ENCODE measurements at regions of chr10 and their contacts with region 1.

Region 1: DNA sequence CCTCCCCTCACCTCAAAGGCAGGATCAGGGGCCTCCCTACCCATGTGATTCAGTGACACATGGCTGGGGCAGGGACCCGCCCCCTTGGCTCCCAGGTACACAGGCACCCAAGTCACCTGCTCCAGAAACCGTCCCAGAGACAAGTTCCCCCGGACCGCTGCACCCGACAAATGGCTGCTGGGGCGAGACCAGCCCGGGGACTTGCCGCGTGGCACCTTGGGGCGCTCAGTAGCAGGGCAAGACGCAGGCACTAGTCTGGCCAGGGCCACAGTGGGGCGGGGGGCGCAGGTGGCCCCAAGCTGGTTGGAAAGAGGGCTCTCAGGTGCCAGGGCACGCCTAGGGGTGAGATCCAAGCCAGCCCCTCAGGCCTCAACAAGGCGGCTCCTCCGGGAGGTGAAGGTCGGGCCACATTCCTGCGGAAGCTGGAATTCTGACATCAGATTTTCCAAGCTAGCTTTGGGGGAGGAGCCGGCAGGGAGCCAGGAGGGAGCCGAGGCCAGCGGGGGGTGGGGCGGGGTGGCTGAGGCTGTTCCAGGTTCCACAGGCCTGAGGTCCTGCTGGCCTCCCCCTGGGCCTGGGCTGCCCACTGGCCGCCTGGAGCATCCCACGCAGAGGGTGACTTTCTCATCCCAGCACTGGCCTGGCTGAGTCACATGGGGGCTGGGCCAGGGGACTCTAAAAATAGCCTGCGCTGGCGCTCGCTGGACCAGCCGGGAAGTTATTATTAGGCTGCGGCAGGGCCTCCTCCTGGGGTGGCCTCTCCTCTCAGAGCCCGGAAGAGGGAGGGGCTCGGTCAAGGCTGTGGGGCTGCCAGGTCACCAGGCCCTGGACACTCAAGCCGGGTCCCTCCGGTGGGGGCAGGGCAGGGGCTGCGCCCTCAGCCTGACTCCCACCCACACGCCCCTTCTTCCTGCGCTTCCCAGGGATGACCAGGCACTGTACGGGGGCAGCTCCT is 20.5 kb upstream of the INPP5A start:
- DNase-seq: peak; percentile 97

Region 2: GRCh38 chr10:132396495-132397035 is 120.5 kb before region 1 on chr10:
- intact Hi-C with region 1: loop called (anchors 5 kb)
- DNase-seq: no peak

Region 3: GRCh38 chr10:132536971-132537712 is 20.1 kb after region 1 on chr10:
- intact Hi-C with region 1: loop called (anchors 1 kb)
- DNase-seq: peak; percentile 100

Region 4: GRCh38 chr10:132588301-132589013 is 71.4 kb after region 1 on chr10:
- intact Hi-C with region 1: loop called (anchors 5 kb)
- DNase-seq: peak; percentile 82

Region 5: DNA sequence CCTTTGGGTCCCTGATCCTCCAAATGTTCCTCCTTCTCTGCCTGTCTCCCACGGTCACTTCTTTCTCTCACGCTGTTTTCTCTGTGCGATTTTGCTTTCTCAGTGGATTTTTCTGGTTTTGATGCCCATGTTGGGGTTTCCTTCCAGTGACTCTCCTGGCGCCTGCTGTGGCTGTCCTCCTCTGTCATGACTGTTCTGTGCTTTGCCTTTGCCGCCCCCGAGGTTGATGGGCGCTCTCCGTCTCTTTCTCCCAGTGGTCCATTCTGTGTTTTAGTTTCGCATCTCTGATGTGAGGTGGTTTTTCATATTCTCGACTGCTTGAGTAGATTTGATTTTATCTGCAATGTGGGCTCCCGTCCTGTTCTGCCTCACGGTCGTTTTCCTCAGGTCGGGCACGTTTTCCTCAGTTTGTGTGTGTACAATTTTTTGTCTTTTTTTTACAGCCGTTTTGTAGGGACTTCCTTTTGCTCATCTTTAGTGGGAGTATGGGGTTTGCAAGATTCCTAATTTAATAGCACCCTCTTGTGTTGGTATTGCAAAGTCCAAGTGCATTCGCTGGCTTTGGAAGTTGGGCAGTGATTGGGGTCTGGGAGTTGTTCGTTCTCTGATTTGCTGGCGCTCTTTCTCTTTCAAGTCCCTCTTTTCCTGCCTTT is 120.6 kb after region 1 on chr10:
- intact Hi-C with region 1: loop called (anchors 1 kb)
- DNase-seq: peak; percentile 62

Region 6: DNA sequence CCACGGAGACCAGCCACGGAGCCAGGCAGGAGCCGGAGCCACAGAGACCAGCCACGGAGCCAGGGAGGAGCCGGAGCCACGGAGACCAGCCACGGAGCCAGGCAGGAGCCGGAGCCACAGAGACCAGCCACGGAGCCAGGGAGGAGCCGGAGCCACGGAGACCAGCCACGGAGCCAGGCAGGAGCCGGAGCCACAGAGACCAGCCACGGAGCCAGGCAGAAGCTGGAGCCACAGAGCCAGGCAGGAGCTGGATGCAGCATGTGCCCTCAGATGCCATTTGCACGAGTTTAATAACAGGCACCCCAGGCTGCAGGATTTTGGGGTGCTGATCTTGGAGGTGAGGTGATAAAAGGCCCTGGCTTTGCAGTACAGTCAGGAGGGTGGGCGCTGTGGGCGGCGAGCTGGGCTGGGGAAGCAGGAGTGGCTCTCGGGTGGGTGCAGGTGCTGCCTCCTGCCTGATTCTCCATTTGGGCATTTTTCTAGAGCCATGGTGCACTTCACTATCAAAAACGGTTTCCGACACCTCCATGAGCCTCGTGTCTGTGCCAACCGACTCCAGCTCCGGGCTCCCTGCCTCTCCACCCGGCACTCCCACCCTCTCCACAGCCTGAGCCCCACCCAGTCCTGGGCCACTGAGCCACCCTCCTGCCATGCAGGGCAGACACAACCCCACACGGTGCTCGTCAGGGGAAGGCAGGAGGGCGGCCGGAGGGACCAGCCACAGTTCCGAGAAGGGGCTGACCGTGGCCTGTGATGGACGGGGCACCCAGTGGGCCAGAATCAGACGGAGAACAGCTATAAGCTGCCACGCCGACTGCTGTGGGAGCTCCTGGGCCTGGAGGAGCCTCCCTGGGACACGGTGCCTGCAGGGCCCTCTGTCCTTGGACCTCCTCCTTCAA is 309.7 kb after region 1 on chr10:
- intact Hi-C with region 1: no loop called
- DNase-seq: peak; percentile 31

Measured in cardiac septum (tissue), 1 donor.